ENCODE measurements at regions of chr13 and their contacts with region 1.

Region 1: DNA sequence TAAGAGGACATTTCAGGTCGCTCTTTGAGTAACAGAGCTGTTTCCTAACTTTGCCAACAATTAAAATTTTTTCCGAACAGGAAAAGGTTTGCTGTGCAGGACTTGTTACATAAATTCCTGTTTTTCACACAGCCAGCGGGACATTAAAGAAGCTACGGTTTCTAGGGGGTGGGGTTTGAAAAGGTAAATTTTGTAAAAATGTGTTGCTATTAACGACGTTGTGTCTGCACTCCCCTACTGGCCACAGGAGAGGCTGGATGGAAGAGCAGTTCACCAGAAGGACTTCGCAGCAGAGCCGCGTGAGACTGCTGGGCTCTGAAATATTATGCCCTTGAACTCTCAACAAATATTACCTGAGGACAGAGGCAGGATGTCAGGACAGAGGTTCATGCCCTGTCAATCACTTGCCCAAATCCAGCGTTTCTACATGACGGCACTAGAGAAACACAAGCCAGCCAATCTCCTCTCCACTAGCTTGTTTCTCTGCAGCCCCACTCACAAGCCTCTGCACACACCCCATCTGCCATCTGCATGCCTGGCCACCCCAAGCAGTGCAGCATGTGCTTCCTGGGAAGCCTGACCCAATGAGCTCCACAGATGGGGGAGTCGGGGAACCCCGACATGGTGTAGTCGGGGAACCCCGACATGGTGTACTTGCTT is 102.0 kb downstream of the FOXO1 start:
- DNase-seq: peak in 18 of 35 experiments; percentile 4 to 48 (median 20)
- ATAC-seq: peak in 2 of 4 experiments; percentile 34 to 74
- H3K4me3 ChIP-seq: no peak overlapping the region
- H3K4me3 Mint-ChIP-seq: peak overlapping the region; percentile 25 to 71 (median 46)
- H3K27ac ChIP-seq: no peak overlapping the region
- H3K27ac Mint-ChIP-seq: peak overlapping the region; percentile 83 to 88
- H3K4me1 ChIP-seq: peaks cover 38 to 65% of the 10 kb centered on the region in 2 experiments
- H3K4me1 Mint-ChIP-seq: peaks cover 88 to 96% (median 92%) of the 10 kb centered on the region in 3 donors
- H3K27me3 ChIP-seq: no peaks in the 10 kb centered on the region
- H3K27me3 Mint-ChIP-seq: no peaks in the 10 kb centered on the region

Region 2: DNA sequence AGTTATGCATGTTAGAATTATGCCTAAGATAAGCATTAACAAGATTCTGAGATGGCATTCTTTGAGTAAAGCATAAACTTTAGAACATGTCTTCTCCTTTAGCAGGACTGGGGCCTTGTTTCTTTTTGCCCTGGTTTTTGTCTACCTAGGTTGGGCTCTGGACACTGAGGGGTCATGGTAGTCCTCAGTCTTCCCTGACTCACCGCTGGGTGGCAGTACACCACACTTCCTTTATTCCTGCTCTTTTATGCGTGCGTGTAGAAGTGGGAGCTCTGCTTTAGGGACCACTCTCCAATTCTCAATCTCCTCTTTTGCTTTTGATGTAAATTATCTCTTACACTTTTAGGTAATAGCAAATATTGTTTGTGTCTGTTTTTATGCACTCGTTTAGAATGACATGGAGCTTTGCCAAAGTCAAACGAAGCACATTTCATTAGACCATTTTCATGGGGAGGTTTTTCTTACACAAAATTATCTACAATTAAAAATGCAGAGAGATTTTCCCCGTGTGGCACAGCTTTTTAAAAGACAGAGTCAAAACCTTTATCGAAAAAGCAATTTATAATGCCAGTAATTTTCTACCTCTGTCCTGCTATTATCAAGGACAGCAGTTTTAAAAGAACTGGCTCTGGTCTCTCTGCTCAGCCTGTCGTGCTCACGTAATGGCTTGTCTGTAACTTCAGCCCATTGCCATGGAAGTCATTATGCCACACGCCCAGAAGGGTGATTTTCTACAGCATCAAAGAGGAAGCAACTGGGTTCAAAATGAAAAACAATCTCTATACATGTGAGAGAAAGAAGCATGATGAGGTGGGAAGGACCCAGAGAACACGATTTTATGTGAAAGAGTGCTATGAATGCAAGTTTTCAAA is 495.1 kb before region 1 on chr13:
- CTCF ChIA-PET with region 1: interaction called, 4 to 10 read pairs
- POLR2A ChIA-PET with region 1: no interaction called
- DNase-seq: peak; percentile 25 to 86 (median 64)
- ATAC-seq: peak; percentile 75 to 95 (median 90)
- H3K4me3 ChIP-seq: no peak overlapping the region
- H3K4me3 Mint-ChIP-seq: peak overlapping the region; percentile 34 to 66 (median 40)
- H3K27ac ChIP-seq: no peak overlapping the region
- H3K27ac Mint-ChIP-seq: peak overlapping the region; percentile 60 to 77
- H3K4me1 ChIP-seq: peaks cover 14 to 18% of the 10 kb centered on the region in 2 experiments
- H3K4me1 Mint-ChIP-seq: peaks cover 24 to 29% (median 27%) of the 10 kb centered on the region in 3 donors
- H3K27me3 ChIP-seq: peaks cover 0 to 3% of the 10 kb centered on the region in 2 experiments
- H3K27me3 Mint-ChIP-seq: no peaks in the 10 kb centered on the region

Region 3: DNA sequence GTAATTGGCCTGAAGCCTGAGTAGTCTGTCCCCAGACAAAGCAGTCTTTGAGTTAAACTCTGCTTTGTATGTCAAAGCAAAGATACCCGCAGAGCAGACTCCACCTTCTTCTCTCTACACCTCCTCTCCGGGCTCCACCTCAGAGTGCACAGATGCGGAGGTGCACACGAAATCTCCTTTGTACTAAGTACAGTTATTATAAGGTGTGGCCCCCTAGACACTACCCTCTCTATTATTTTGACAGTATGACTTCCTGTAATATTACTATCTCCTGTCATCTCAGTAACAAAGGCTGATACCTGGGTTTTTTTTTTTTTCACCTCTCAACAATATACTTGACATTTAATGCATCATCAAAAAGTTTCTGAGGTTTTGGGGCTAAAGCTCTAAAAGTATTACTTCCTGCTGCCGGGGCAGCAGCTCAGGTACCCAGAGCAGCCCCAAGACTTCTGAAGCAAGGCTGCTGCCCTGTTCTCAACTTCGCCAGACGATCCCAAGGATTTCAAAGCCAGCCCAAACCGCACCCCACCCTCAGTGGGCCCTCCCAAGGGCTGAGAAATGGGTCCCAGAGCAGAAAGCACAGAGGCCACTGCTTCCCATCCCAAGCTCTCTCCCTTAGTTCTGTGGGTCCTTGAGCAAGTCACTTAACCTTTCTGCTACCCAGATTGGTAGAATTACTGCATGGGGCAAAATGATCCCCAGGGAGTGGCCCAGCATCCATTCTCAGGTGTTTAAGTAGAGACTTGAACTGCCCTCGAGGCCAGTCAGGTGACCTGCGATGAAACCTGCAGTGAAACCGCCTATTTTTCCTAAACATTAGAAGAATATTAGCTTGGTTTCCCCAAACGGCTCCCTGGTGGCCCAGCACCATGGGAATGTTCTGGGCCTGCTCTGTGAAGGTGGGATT is 78.6 kb before region 1 on chr13:
- CTCF ChIA-PET with region 1: no interaction called
- POLR2A ChIA-PET with region 1: interaction called, 4 to 18 read pairs
- DNase-seq: peak; percentile 48 to 91 (median 76)
- ATAC-seq: peak; percentile 92 to 94 (median 94)
- H3K4me3 ChIP-seq: peak overlapping the region in 1 of 2 donors; percentile 7
- H3K4me3 Mint-ChIP-seq: peak overlapping the region; percentile 54 to 76 (median 67)
- H3K27ac ChIP-seq: peak overlapping the region; percentile 73
- H3K27ac Mint-ChIP-seq: peak overlapping the region; percentile 94 to 97
- H3K4me1 ChIP-seq: peaks cover 71 to 98% of the 10 kb centered on the region in 2 experiments
- H3K4me1 Mint-ChIP-seq: peaks cover 88 to 93% (median 89%) of the 10 kb centered on the region in 3 donors
- H3K27me3 ChIP-seq: no peaks in the 10 kb centered on the region
- H3K27me3 Mint-ChIP-seq: no peaks in the 10 kb centered on the region

Region 4: DNA sequence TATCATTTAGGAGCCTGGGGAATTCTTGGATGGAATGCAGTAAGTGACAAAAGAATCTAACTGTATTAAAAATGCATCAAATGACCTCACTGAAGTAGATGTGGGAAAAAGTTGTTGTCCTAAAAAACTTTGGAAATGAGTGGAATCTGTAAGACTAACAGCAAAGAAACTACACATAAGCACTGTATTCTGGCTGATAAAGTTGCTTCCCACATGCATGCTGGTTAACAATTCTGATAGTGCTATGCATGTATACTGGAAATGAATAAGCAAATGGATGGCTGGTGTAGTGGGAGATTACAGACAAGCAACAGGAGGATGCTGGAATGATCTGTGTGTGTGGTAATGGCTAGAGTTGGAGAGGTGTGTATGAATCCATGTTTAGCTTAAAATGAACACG is 36.6 kb before region 1 on chr13:
- CTCF ChIA-PET with region 1: no interaction called
- POLR2A ChIA-PET with region 1: no interaction called
- DNase-seq: no peak
- ATAC-seq: no peak
- H3K4me3 ChIP-seq: no peak overlapping the region
- H3K4me3 Mint-ChIP-seq: no peak overlapping the region
- H3K27ac ChIP-seq: no peak overlapping the region
- H3K27ac Mint-ChIP-seq: no peak overlapping the region
- H3K4me1 ChIP-seq: peaks cover 0 to 2% of the 10 kb centered on the region in 2 experiments
- H3K4me1 Mint-ChIP-seq: peaks cover 32 to 39% (median 37%) of the 10 kb centered on the region in 3 donors
- H3K27me3 ChIP-seq: no peaks in the 10 kb centered on the region
- H3K27me3 Mint-ChIP-seq: no peaks in the 10 kb centered on the region

Region 5: GRCh38 chr13:41590122-41590521 is 1025.7 kb after region 1 on chr13:
- CTCF ChIA-PET with region 1: no interaction called
- POLR2A ChIA-PET with region 1: interaction called in 1 of 2 experiments, 12 read pairs
- DNase-seq: no peak
- ATAC-seq: no peak
- H3K4me3 ChIP-seq: no peak overlapping the region
- H3K4me3 Mint-ChIP-seq: no peak overlapping the region
- H3K27ac ChIP-seq: no peak overlapping the region
- H3K27ac Mint-ChIP-seq: peak overlapping the region in 1 of 2 donors; percentile 2
- H3K4me1 ChIP-seq: no peaks in the 10 kb centered on the region
- H3K4me1 Mint-ChIP-seq: peaks cover 0 to 11% (median 11%) of the 10 kb centered on the region in 3 donors
- H3K27me3 ChIP-seq: no peaks in the 10 kb centered on the region
- H3K27me3 Mint-ChIP-seq: no peaks in the 10 kb centered on the region